Breast epithelium (tissue), 4 donors: ENCODE measurements at regions of chrX and their contacts with region 1.

Region 1: GRCh38 chrX:19579485-19579884 is 64.2 kb upstream of the MAP3K15 start:
- DNase-seq: no peak
- H3K4me3 ChIP-seq: no peak overlapping the region
- H3K27ac ChIP-seq: no peak overlapping the region
- H3K4me1 ChIP-seq: no peaks in the 10 kb centered on the region
- H3K27me3 ChIP-seq: peaks cover 0 to 21% of the 10 kb centered on the region in 2 donors
- CTCF ChIP-seq: no peak
- POLR2A ChIP-seq: no peak

Region 2: DNA sequence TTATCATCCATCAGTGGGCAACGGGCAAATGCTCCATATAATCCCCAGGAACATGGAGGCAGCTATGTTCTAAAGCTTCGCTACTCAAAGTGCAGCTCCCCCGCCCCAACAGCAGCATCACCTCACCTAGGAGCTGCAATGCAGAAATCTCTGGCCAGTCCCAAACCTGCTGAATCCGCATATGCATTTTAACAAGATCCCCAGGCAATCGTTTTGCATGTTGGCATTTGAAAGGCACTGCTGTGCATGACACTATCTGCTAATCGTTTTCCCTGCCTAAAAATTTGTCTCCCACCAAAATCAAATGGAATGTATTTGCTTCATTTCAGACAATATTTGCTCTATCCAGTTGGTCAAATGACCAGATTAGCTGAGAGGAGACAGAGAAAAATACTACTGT is 472.4 kb before region 1 on chrX:
- intact Hi-C with region 1: loop called (anchors 5 kb)
- DNase-seq: no peak
- H3K4me3 ChIP-seq: no peak overlapping the region
- H3K27ac ChIP-seq: no peak overlapping the region
- H3K4me1 ChIP-seq: no peaks in the 10 kb centered on the region
- H3K27me3 ChIP-seq: peaks cover 0 to 25% of the 10 kb centered on the region in 2 donors
- CTCF ChIP-seq: no peak
- POLR2A ChIP-seq: no peak

Region 3: DNA sequence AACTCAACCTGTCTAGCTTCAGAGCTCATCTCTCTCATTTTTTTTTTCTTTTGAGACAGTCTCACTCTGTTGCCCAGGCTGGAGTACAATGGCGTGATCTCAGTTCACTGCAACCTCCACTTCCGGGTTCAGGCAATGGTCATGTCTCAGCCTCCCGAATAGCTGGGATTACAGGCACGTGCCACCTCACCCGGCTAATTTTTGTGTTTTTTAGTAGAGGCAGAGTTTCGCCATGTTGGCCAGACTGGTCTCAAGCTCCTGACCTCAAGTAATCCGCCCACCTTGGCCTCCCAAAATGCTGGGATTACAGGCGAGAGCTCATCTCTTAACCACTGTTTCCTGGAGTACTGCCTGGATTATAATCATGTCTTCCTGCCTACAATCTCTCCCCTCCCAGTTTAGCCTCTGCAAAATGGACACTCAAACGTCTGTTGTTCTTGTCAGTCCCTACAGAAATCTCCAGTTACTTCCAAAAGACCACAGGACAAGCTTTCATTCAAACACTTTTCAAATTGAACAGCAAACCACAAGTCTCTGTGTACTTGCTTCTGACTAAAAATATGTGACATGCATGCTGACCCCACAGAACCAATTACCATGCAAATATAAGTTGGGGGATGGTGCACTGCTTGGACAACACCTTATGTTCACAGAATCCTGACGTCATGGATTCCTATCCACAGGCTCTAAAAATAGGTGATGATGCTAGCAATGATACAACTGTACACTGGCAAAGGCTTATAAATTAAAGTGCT is 170.7 kb after region 1 on chrX:
- intact Hi-C with region 1: loop called (anchors 5 kb)
- DNase-seq: no peak
- H3K4me3 ChIP-seq: no peak overlapping the region
- H3K27ac ChIP-seq: no peak overlapping the region
- H3K4me1 ChIP-seq: no peaks in the 10 kb centered on the region
- H3K27me3 ChIP-seq: peaks cover 0 to 10% of the 10 kb centered on the region in 2 donors
- CTCF ChIP-seq: no peak
- POLR2A ChIP-seq: no peak

Region 4: DNA sequence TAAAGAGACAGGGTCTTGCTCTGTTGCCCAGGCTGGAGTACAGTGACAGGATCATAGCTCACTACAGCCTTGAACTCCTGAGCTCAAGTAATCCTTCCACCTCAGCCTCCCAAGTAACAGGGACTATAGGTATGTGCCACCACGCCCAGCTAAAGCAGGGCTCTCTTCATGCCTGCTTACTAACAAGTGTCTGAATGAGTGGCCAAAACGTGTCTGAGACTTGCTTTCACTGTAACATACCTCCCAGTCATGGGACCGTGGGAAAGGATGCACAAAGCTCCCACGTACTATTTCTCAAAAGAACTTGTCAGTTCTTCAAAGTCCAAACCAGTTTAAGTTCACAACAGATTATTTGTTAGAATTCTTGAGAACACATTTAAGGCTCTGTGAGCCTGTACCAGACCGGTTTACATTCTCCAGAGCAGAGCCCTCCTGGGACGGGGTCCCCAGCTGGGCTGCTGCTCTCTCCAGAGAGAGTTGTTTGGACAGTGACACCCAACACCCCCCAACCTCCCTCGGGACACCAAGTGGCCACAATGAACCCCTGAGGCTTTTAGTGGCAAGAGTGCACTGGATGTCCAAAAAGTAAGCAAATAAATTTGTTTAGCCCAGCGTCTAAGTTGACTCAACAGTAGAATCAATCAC is 283.8 kb after region 1 on chrX:
- intact Hi-C with region 1: no loop called
- DNase-seq: no peak
- H3K4me3 ChIP-seq: no peak overlapping the region
- H3K27ac ChIP-seq: peak overlapping the region in 1 of 2 donors; percentile 19
- H3K4me1 ChIP-seq: no peaks in the 10 kb centered on the region
- H3K27me3 ChIP-seq: peaks cover 0 to 46% of the 10 kb centered on the region in 2 donors
- CTCF ChIP-seq: no peak
- POLR2A ChIP-seq: no peak